Left cardiac atrium (tissue), 4 donors: ENCODE measurements at regions of chr9 and their contacts with region 1.

Region 1: DNA sequence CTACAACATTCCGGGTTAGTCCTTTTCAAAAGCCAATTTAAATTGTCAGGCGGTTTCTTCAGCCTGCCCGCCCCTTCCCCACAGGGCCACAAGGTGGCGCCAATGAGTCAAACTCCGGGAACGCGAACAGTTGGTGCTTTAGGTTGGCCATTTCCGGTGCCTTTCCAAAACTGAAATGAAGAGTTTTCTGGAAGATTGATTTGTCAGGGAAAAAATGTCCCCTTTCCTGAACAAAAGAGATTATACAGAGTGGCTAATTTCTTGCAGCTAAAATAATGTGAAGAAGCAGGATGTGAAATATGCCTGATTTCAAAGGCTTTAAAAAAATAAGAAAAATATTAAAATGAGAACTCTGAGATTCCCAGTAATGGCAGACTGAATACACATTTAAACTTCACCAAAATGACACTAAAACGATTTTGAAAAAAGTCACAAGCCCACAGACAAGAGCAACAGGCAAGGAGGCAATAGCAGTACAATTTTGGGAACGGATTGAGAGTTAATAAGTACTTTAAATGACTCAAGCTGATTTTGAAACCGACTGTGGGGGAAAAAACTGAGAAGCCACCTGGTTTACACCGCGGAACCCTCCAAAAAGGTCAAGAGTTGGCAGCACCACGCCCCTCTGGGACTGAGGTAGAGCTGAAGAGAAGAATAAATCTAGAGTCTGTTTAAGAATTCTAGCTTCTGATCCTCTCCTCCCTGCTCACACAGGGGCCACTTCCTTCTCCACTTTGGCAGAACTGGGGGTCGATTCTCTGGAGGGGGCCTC is 45.7 kb downstream of the SLC46A2 start:
- DNase-seq: peak; percentile 79
- ATAC-seq: peak; percentile 78 to 80

Region 2: GRCh38 chr9:112486221-112487007 is 358.5 kb before region 1 on chr9 and contains the start of gene KIAA1958:
- intact Hi-C with region 1: no loop called
- DNase-seq: peak; percentile 90
- ATAC-seq: peak; percentile 91 to 97
- total RNA-seq, gene KIAA1958: 3.3 to 3.6 TPM

Region 3: GRCh38 chr9:112898872-112899311 is 53.9 kb after region 1 on chr9:
- intact Hi-C with region 1: loop called in 1 of 2 experiments (anchors 2 kb)
- DNase-seq: no peak
- ATAC-seq: no peak

Region 4: DNA sequence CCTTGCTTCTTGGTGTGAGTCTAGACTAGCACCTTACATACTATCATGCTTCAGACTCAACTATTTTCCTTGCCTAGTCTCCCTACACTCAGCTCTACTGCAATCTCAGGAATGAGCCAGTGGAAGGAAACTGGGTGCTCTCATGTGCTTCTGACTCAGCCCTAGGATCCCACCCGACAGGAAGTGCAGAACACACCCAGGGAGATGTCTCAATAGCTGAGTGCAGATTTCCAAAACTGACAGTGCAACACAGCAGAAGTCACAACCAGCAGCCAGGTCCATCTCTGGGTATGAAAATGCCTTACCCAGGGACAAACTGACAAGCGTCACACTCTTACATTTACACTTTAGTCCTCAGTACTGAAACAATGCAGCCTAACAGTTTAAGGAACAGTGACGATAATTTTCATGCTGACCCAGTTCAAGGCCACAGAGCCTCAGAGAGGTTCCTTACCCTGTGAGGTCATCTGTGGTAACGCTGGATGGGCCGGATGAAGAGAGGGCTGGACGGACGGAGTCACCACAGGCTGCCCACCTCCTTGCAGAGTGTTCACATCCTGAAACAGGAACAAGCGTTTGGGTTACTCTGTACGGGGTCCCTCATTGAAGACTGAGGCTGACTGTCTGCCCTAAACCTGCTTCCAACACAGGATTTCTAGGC is 343.1 kb after region 1 on chr9:
- intact Hi-C with region 1: no loop called
- DNase-seq: peak; percentile 53
- ATAC-seq: peak; percentile 63 to 94